GM12878 (cell line): ENCODE measurements at regions of chr17 and their contacts with region 1.

Region 1: DNA sequence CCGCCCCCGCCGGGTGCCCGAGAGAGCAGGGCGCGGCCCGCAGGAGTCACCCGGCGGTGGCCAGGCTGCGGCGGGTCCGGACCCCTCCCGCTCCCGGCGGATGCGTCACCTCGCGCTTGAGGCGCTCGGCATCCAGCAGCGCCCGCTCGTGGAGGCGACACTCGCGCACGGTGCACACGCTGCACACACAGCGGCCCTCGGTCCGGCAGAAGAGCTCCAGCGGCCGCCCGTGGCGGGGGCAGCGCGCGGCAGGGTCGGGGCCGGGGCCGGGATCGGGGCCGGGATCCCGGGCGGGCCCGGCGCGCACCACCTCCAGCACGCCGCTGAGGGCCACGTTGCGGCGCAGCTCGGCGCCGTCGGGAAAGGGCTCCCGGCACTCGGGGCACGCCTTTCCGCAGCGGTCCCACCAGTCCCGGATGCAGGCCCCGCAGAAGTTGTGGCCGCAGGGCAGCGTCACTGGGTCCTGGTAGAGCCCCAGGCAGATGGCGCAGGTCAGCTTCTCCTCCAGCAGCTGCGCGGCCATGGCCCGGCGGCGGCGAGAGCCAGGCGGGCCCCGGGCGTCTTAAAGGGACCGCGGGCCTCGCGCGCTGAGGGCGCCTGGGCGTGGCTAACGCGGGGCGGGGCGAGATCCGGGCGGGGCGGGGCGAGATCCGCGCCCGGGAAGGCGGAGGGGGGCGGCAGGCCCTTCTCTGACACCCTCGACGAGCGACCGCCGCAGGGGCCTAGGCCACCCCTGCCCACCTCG is at the start of gene TRIM65:
- DNase-seq: no peak
- ATAC-seq: peak; percentile 91
- H3K4me3 ChIP-seq: peak within 1 kb of the TSS; percentile 89
- H3K27ac ChIP-seq: peak within 1 kb of the TSS; percentile 72
- H3K4me1 ChIP-seq: peaks cover 6% of the 10 kb centered on the region
- H3K27me3 ChIP-seq: no peaks in the 10 kb centered on the region
- CTCF ChIP-seq: peak; percentile 27 to 74 (median 39); a peak in 4 of 6 replicates
- EP300 ChIP-seq: no peak
- POLR2A ChIP-seq: peak; percentile 93
- RAD21 ChIP-seq: peak; percentile 38; the same call in 1 of the 2 replicates
- polyA plus RNA-seq, gene TRIM65: 1.4 to 3.8 TPM

Region 2: GRCh38 chr17:75779231-75779986 is 117.2 kb before region 1 on chr17:
- CTCF ChIA-PET with region 1: interaction called, 5 read pairs
- POLR2A ChIA-PET with region 1: interaction called, 6 read pairs
- RAD21 ChIA-PET with region 1: interaction called, 5 read pairs
- SMC1A ChIA-PET with region 1: interaction called, 3 read pairs
- in situ Hi-C with region 1: no loop called
- intact Hi-C with region 1: loop called (anchors 5 kb)
- DNase-seq: peak; percentile 100
- ATAC-seq: peak; percentile 81
- H3K4me3 ChIP-seq: peak overlapping the region; percentile 88
- H3K27ac ChIP-seq: peak overlapping the region; percentile 90
- H3K4me1 ChIP-seq: peaks cover 16% of the 10 kb centered on the region
- H3K27me3 ChIP-seq: no peaks in the 10 kb centered on the region
- CTCF ChIP-seq: no peak
- EP300 ChIP-seq: peak in 1 of 2 experiments; percentile 24; a peak in 1 of 4 replicates
- POLR2A ChIP-seq: peak; percentile 100
- RAD21 ChIP-seq: no peak

Region 3: DNA sequence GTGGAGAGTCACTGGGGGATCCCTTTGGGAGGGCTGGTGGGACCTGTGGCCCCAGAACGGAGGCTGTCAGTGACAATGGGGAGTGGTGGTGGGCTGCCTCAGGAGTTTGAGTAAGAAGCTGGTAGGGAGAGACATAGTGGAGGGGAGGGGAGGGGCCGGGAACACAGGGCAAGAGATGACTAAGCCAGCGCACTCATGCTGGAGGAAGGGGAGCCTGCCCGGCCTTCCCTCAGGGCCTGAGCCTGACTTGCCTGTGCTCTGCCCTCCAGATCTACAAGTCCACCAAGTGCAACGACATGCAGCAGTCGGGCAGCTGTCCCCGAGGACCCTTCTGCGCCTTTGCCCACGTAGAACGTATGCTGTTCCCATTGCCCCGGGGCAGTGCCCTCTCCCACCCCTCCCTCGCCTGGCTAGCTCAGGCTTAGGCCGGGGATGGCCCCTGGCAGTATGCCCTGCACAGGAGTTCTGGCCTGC is 81.7 kb before region 1 on chr17:
- CTCF ChIA-PET with region 1: no interaction called
- POLR2A ChIA-PET with region 1: no interaction called
- RAD21 ChIA-PET with region 1: no interaction called
- SMC1A ChIA-PET with region 1: no interaction called
- in situ Hi-C with region 1: no loop called
- intact Hi-C with region 1: no loop called
- DNase-seq: no peak
- ATAC-seq: no peak
- H3K4me3 ChIP-seq: no peak overlapping the region
- H3K27ac ChIP-seq: no peak overlapping the region
- H3K4me1 ChIP-seq: no peaks in the 10 kb centered on the region
- H3K27me3 ChIP-seq: no peaks in the 10 kb centered on the region
- CTCF ChIP-seq: no peak
- EP300 ChIP-seq: no peak
- POLR2A ChIP-seq: peak; percentile 24; the same call in 1 of the 2 replicates
- RAD21 ChIP-seq: no peak

Region 4: DNA sequence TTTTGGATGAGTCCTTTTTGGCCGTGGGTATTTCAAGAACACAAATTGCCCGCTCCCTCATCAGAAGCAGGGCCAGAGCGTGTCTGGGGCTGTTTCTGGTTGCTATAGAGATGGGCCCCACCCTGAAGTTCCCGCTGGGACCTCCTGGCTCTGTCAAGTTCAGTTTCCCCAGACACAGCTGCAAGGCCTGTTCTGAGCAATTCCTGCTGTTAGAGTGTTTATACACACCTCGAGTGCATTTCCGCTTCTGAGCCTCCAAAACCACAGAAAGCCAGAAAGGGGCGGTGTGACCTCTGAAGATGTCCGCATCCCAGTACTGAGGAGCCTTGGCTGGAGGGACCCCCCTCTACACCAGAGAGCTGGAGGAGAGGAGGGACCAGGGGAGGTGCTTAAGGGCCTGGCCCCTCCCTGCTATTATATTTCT is 32.1 kb before region 1 on chr17:
- CTCF ChIA-PET with region 1: interaction called, 16 read pairs
- POLR2A ChIA-PET with region 1: interaction called, 8 read pairs
- RAD21 ChIA-PET with region 1: interaction called, 3 read pairs
- SMC1A ChIA-PET with region 1: interaction called, 3 read pairs
- in situ Hi-C with region 1: no loop called
- intact Hi-C with region 1: loop called (anchors 5 kb)
- DNase-seq: peak; percentile 77
- ATAC-seq: peak; percentile 90
- H3K4me3 ChIP-seq: peak overlapping the region; percentile 22; the same call in 1 of the 2 replicates
- H3K27ac ChIP-seq: peak overlapping the region; percentile 29
- H3K4me1 ChIP-seq: peaks cover 22% of the 10 kb centered on the region
- H3K27me3 ChIP-seq: no peaks in the 10 kb centered on the region
- CTCF ChIP-seq: no peak
- EP300 ChIP-seq: peak in 1 of 2 experiments; percentile 38; a peak in 1 of 4 replicates
- POLR2A ChIP-seq: no peak
- RAD21 ChIP-seq: no peak

Region 5: GRCh38 chr17:75877752-75878173 is 18.8 kb before region 1 on chr17:
- CTCF ChIA-PET with region 1: interaction called, 43 read pairs
- POLR2A ChIA-PET with region 1: interaction called, 12 read pairs
- RAD21 ChIA-PET with region 1: interaction called, 3 read pairs
- SMC1A ChIA-PET with region 1: interaction called, 5 read pairs
- in situ Hi-C with region 1: no loop called
- intact Hi-C with region 1: loop called (anchors 2 kb)
- DNase-seq: no peak
- ATAC-seq: peak; percentile 83
- H3K4me3 ChIP-seq: peak overlapping the region; percentile 29; the same call in 1 of the 2 replicates
- H3K27ac ChIP-seq: no peak overlapping the region
- H3K4me1 ChIP-seq: peaks cover 25% of the 10 kb centered on the region
- H3K27me3 ChIP-seq: peaks cover 2% of the 10 kb centered on the region in 2 experiments
- CTCF ChIP-seq: peak; percentile 40 to 50 (median 45); a peak in 5 of 6 replicates
- EP300 ChIP-seq: no peak
- POLR2A ChIP-seq: no peak
- RAD21 ChIP-seq: no peak